ENCODE measurements at regions of chr10 and their contacts with region 1.

Region 1: DNA sequence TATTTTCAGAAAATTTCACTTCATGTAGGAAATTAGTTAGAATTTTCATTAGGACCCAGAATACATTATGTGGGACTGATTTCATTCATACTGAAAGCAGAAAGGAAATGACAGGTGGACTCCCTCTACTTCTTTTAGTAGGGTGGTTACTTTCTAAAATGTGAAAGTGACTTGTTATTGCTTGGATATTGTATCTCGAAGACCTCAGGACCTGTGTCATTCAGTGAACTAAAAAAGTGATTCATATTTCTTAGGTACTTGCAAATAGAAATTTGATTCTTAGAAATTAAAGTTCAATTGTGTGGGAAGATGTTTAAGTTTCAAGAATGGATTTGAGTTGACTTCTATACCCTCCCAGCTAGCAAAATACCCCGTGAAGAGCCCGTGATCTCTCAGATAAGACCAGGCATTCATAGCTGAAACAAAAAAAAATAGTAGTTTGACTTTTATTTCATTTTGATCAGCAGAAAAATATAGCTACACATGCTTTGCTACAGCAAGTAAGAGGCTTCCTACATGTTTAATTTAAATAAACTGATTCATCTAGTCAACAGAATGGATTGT is 1037.1 kb downstream of the GATA3 start:
- DNase-seq: no peak
- H3K4me3 Mint-ChIP-seq: no peak overlapping the region
- H3K27ac Mint-ChIP-seq: no peak overlapping the region
- H3K4me1 Mint-ChIP-seq: peaks cover 11% of the 10 kb centered on the region
- H3K27me3 Mint-ChIP-seq: peaks cover 4% of the 10 kb centered on the region

Region 2: DNA sequence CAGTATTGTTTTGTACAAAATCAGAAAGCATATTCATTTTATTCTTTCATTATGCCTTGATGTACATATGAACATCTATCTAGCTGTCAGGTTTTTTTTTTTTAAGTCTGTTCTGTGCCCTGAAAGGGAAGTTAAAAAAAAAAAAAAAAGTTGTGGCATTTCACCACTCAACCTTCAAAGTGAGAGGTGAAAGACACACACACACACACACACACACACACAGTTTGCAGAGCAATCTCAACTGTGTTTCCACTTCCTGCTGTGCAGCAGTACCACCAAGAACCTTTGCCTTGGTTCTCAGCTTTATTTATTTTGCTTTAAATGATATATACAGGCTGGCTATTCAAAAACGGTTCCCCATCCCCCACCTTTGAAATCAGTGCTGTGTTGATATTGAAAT is 81.5 kb before region 1 on chr10:
- intact Hi-C with region 1: loop called (anchors 1 kb)
- DNase-seq: no peak
- H3K4me3 Mint-ChIP-seq: no peak overlapping the region
- H3K27ac Mint-ChIP-seq: no peak overlapping the region
- H3K4me1 Mint-ChIP-seq: no peaks in the 10 kb centered on the region
- H3K27me3 Mint-ChIP-seq: peaks cover 2% of the 10 kb centered on the region

Region 3: DNA sequence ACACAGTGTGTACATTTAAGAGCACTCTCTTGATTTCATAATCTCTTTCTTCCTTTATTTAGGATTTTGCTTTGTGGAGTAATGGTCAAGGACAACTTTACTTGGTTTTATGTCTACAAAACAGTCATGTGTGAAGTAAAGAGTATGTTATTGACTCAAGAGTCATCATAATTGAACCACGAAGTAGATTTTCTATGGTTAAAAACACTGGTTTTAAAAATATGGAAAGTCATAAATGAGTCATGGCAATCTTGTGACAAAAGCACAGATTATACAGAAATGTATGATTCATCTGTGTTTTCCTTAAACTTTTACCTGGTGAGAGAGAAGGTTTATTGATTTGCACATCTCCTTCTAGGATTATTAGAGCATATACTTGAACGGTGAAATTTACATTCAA is 67.4 kb before region 1 on chr10:
- intact Hi-C with region 1: loop called (anchors 1 kb)
- DNase-seq: no peak
- H3K4me3 Mint-ChIP-seq: no peak overlapping the region
- H3K27ac Mint-ChIP-seq: peak overlapping the region; percentile 6
- H3K4me1 Mint-ChIP-seq: peaks cover 7% of the 10 kb centered on the region
- H3K27me3 Mint-ChIP-seq: peaks cover 7% of the 10 kb centered on the region